ENCODE measurements at regions of chr1 and their contacts with region 1.

Region 1: GRCh38 chr1:161201828-161202725 is at the start of gene NDUFS2:
- DNase-seq: peak; percentile 98
- H3K4me3 Mint-ChIP-seq: peak within 1 kb of the TSS; percentile 96
- H3K27ac Mint-ChIP-seq: peak within 1 kb of the TSS; percentile 98
- H3K4me1 Mint-ChIP-seq: peaks cover 75% of the 10 kb centered on the region
- H3K27me3 Mint-ChIP-seq: no peaks in the 10 kb centered on the region
- total RNA-seq, gene NDUFS2: 74.2 to 82.1 TPM

Region 2: GRCh38 chr1:160904783-160905616 is 297.1 kb before region 1 on chr1:
- CTCF ChIA-PET with region 1: no interaction called
- POLR2A ChIA-PET with region 1: no interaction called
- DNase-seq: no peak
- H3K4me3 Mint-ChIP-seq: no peak overlapping the region
- H3K27ac Mint-ChIP-seq: no peak overlapping the region
- H3K4me1 Mint-ChIP-seq: no peaks in the 10 kb centered on the region
- H3K27me3 Mint-ChIP-seq: peaks cover 9% of the 10 kb centered on the region

Region 3: DNA sequence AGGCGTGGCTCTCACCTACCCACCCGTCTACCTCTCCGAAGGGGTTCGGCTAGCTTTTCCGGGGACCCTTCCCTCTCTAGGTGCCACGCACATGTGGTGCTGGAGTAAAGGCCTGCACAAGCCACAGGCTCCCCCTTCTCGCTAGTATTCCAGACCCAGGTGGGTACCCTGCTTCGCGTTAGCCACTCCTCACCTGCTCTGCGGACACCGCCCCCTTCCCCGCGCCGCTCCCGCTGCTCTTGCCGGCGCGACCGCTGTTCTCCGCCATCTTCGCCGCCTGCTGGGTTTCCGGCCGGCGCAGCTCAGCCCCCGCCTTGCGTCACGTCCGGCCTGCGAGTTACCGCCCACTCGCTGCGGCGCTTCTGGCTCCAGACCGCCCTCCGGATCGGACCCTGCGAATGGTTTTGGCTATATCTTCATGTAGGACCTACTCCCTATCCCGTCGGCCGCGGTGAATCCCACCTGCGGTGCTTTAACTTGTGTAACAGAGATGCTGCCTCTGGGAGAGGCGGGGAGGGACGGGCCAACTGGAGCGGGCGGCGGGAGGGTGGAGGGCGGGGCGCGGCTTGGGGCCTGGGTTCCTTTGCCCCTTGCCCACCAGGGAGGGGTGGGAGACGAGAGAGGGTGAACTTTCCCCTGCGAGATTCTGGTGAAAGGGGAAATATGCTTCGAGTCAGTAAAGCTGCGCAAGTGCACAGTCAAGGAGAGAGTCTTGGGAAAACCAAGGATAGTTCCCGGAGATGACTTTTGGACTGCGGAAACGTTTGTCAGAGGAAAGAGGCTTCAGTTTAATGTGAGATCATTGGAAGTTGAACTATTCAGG is 84.1 kb before region 1 on chr1 and contains the starts of genes NIT1 and PFDN2:
- CTCF ChIA-PET with region 1: no interaction called
- POLR2A ChIA-PET with region 1: no interaction called
- DNase-seq: peak; percentile 86
- H3K4me3 Mint-ChIP-seq: peak within 1 kb of the TSS; percentile 94
- H3K27ac Mint-ChIP-seq: peak within 1 kb of the TSS; percentile 92
- H3K4me1 Mint-ChIP-seq: peaks cover 71% of the 10 kb centered on the region
- H3K27me3 Mint-ChIP-seq: no peaks in the 10 kb centered on the region
- total RNA-seq, gene NIT1: 37.7 to 39.0 TPM
- total RNA-seq, gene PFDN2: 46.0 to 56.0 TPM

Region 4: DNA sequence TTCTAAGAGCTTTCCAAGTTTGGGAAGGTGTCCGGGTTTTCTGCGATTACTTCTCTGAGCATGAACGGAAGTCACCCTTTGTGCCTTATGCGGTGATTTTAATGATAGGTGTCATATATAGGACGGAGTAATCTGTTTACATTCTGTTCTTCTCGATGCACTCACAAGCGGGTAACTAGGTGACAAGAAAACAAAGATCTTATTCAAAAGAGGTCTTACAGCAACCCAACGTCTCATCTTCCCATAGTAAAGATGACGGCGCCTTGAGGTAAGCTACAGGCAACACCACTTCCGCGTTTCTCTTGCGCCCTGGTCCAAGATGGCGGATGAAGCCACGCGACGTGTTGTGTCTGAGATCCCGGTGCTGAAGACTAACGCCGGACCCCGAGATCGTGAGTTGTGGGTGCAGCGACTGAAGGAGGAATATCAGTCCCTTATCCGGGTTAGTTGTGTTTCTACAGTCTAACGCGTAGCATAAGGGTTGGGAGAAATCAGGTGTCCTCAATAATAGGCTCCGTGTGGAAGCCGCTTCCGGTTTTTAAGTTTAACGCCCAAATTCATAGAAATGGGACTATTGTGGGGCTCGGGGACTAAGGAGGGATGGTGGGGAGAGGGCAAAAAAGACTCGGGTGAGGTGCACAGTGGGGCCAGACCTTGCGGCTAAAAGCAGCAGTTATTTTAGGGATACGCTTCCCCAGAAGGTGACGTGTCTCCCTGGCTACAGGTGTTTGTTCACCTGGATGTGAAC is 48.2 kb before region 1 on chr1 and contains the start of gene UFC1:
- CTCF ChIA-PET with region 1: no interaction called
- POLR2A ChIA-PET with region 1: no interaction called
- DNase-seq: peak; percentile 90
- H3K4me3 Mint-ChIP-seq: peak within 1 kb of the TSS; percentile 90
- H3K27ac Mint-ChIP-seq: peak within 1 kb of the TSS; percentile 100
- H3K4me1 Mint-ChIP-seq: peaks cover 34% of the 10 kb centered on the region
- H3K27me3 Mint-ChIP-seq: no peaks in the 10 kb centered on the region
- total RNA-seq, gene UFC1: 115 to 120 TPM

Region 5: GRCh38 chr1:161177112-161177935 is 24.8 kb before region 1 on chr1 and contains the start of gene B4GALT3:
- CTCF ChIA-PET with region 1: interaction called, 11 read pairs
- POLR2A ChIA-PET with region 1: no interaction called
- DNase-seq: peak; percentile 92
- H3K4me3 Mint-ChIP-seq: peak within 1 kb of the TSS; percentile 96
- H3K27ac Mint-ChIP-seq: peak within 1 kb of the TSS; percentile 99
- H3K4me1 Mint-ChIP-seq: peaks cover 74% of the 10 kb centered on the region
- H3K27me3 Mint-ChIP-seq: no peaks in the 10 kb centered on the region
- total RNA-seq, gene B4GALT3: 43.1 to 48.6 TPM